ENCODE measurements at regions of chr21 and their contacts with region 1.

Region 1: GRCh38 chr21:25385911-25386474 is 221.3 kb downstream of the MRPL39 start:
- DNase-seq: no peak
- ATAC-seq: peak; percentile 49
- H3K4me3 Mint-ChIP-seq: no peak overlapping the region
- H3K27ac Mint-ChIP-seq: no peak overlapping the region
- H3K4me1 Mint-ChIP-seq: peaks cover 12% of the 10 kb centered on the region
- H3K27me3 Mint-ChIP-seq: peaks cover 5% of the 10 kb centered on the region

Region 2: DNA sequence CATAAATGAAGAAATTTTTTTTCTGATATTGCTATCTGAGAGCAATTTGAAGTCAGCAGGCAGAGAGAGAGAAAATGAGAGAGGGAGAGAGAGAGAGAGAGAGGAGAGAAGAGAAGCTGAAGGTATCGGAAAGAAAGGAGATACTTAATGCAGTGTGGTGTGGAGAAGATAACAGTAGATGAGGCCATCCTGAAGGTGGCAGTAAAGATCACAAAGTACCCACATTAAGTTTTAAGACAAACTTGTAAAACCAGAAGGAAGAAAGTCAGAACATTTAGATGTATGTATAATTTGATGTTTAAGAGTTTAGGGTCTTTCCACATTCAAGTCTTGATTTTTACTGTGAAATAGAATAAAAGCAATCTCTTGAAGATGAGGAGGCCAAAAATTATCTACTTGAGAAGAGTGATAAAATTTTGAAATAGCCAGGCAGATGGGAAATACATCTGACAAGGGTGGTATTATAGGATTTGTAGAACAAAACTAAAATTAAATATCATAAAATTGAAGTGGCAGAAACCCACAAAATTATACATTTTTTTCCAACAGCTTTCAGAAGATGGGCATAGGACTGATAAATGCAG is 1532.1 kb before region 1 on chr21:
- CTCF ChIA-PET with region 1: no interaction called
- POLR2A ChIA-PET with region 1: no interaction called
- intact Hi-C with region 1: loop called in 1 of 2 experiments (anchors 10 kb)
- DNase-seq: no peak
- ATAC-seq: peak; percentile 61
- H3K4me3 Mint-ChIP-seq: no peak overlapping the region
- H3K27ac Mint-ChIP-seq: no peak overlapping the region
- H3K4me1 Mint-ChIP-seq: peaks cover 2% of the 10 kb centered on the region
- H3K27me3 Mint-ChIP-seq: no peaks in the 10 kb centered on the region

Region 3: GRCh38 chr21:24375201-24375600 is 1010.8 kb before region 1 on chr21:
- CTCF ChIA-PET with region 1: interaction called, 3 read pairs
- POLR2A ChIA-PET with region 1: no interaction called
- intact Hi-C with region 1: loop called (anchors 1 to 10 kb)
- DNase-seq: peak; percentile 49
- ATAC-seq: peak; percentile 36
- H3K4me3 Mint-ChIP-seq: no peak overlapping the region
- H3K27ac Mint-ChIP-seq: no peak overlapping the region
- H3K4me1 Mint-ChIP-seq: no peaks in the 10 kb centered on the region
- H3K27me3 Mint-ChIP-seq: no peaks in the 10 kb centered on the region

Region 4: DNA sequence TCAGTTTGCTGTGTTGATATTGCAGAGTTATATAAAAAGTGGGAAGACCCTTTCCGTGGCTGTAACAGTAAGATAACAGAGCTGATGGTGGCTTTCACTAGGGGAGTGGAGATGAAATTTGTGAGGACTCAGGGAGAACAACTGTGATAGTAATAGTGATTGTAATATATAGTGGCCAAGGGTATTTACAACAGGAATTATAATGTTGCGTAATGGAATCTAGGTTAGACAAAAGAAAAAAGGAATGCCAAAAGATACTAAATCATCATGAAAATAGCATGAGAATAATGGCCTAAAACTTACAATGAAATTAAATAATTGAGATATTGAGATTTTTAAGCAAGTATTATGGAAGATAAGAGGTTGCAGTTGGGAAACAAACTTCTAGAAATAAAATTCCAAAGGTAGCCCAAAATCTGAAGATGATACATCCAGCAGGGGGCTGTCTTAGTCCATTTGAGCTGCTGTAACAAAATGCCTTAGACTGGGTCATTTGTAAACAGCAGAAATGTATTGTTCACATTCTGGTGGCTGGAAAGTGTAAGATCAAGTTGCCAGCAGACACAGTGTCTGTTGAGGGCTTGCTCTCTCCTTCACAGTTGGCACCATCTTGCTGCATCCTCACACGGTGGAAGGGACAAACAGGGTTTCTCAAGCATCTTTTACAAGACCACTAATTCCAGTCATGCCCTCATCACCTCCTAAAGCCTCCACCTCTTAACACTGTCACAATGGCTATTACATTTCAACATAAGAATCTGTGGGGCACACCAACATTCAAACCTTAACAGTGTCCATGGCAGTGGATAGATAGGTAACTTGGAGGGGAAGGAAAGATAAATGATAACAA is 489.9 kb before region 1 on chr21:
- CTCF ChIA-PET with region 1: interaction called, 3 read pairs
- POLR2A ChIA-PET with region 1: no interaction called
- intact Hi-C with region 1: loop called (anchors 2 to 5 kb)
- DNase-seq: peak; percentile 4
- ATAC-seq: no peak
- H3K4me3 Mint-ChIP-seq: no peak overlapping the region
- H3K27ac Mint-ChIP-seq: no peak overlapping the region
- H3K4me1 Mint-ChIP-seq: no peaks in the 10 kb centered on the region
- H3K27me3 Mint-ChIP-seq: no peaks in the 10 kb centered on the region

Region 5: DNA sequence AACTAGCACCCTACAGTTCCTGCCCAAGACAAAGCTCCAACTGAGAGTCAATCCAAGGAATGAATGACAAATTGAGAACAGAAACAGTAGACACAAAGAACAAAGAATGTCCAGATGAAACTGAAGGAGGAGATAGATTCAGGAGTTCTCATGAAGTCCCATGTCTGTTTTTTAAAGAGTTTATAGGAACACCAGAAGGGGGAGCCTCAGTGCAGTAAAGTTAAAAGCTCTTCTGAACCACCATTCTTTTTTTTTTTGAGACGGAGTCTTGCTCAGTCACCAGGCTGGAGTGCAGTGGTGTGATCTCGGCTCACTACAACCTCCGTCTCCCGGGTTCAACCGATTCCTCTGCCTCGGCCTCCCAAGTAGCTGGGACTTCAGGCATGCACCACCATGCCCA is 102.3 kb before region 1 on chr21:
- CTCF ChIA-PET with region 1: interaction called, 32 read pairs
- POLR2A ChIA-PET with region 1: no interaction called
- intact Hi-C with region 1: loop called (anchors 1 kb)
- DNase-seq: peak; percentile 5
- ATAC-seq: peak; percentile 49
- H3K4me3 Mint-ChIP-seq: no peak overlapping the region
- H3K27ac Mint-ChIP-seq: no peak overlapping the region
- H3K4me1 Mint-ChIP-seq: no peaks in the 10 kb centered on the region
- H3K27me3 Mint-ChIP-seq: peaks cover 4% of the 10 kb centered on the region

Region 6: GRCh38 chr21:25350056-25350455 is 35.9 kb before region 1 on chr21:
- CTCF ChIA-PET with region 1: interaction called, 63 read pairs
- POLR2A ChIA-PET with region 1: no interaction called
- intact Hi-C with region 1: loop called (anchors 1 to 2 kb)
- DNase-seq: peak; percentile 75
- ATAC-seq: peak; percentile 77
- H3K4me3 Mint-ChIP-seq: no peak overlapping the region
- H3K27ac Mint-ChIP-seq: no peak overlapping the region
- H3K4me1 Mint-ChIP-seq: peaks cover 7% of the 10 kb centered on the region
- H3K27me3 Mint-ChIP-seq: peaks cover 27% of the 10 kb centered on the region

Region 7: DNA sequence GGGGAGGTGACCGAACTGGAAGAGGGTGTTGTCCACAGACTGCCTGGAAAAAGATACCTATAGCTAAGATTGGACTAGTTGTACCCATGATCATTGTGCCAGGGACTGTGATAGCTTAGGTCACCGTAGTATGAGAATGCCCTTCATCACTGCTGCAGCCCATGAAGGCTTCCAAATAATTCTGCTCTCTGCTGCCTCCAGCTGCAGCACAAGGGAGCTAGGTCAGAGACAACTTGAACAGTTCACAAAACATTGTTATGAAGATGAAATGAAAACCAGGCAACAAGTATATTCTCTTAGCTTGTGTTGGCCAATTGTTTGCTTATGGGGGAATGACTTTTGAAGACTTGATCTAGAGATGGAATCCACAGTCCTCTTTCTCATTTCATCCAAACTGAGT is 25.4 kb before region 1 on chr21:
- CTCF ChIA-PET with region 1: interaction called, 10 read pairs
- POLR2A ChIA-PET with region 1: no interaction called
- intact Hi-C with region 1: no loop called
- DNase-seq: peak; percentile 24
- ATAC-seq: peak; percentile 70
- H3K4me3 Mint-ChIP-seq: no peak overlapping the region
- H3K27ac Mint-ChIP-seq: no peak overlapping the region
- H3K4me1 Mint-ChIP-seq: peaks cover 19% of the 10 kb centered on the region
- H3K27me3 Mint-ChIP-seq: no peaks in the 10 kb centered on the region

Region 8: GRCh38 chr21:25457411-25457810 is 71.4 kb after region 1 on chr21:
- CTCF ChIA-PET with region 1: no interaction called
- POLR2A ChIA-PET with region 1: no interaction called
- intact Hi-C with region 1: no loop called
- DNase-seq: no peak
- ATAC-seq: peak; percentile 46
- H3K4me3 Mint-ChIP-seq: peak overlapping the region; percentile 67
- H3K27ac Mint-ChIP-seq: peak overlapping the region; percentile 89
- H3K4me1 Mint-ChIP-seq: peaks cover 83% of the 10 kb centered on the region
- H3K27me3 Mint-ChIP-seq: no peaks in the 10 kb centered on the region

Measured in activated CD4-positive, alpha-beta T cell treated with anti-CD3 and anti-CD28 coated beads for 36 hours (primary cell).